ENCODE measurements at regions of chr17 and their contacts with region 1.

Region 1: DNA sequence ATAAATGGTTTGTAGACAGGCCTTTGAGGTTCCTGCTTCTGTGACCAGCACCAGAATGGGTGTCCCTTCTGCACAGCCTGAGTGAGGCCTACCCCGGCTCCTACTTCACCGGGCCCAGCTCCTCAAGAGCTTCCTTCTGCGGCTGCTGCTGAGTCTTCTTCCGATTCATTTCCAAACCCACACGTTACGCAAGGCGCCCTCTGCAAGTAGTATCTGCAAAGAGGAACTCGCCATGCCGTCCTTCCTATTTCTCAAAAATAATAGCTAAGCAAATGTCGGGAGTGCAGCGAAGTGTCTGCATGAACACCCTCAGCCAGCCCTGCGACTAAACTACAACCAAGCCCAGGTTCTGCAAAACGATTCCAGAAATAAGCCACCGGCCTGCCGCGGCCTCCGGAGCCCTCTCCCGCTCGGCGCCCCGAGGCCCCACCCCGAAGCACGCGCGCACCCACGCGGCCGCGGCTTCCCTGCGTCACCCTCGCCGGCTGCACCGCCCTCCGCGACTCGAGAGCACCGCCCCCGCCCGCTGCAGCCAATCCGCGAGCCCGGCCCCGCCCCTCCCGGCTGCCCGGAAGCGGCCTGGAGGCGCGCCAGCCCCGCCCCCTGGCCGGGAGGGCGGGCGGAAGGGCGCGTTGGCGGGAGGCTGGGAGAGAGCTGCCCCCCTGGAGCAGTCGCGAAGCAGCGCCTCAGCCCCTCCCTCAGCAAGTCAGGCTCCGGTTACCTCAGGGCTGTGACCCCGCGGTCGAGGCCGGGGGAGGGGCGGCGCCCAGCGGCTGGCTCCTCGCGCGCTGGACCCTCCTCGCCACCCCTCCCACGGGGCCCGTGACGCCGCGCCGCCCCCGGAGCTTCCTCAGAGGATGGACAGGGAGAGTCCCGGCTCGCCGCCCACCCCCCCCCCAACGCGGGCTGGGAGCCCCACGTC is 8.3 kb downstream of the MNT start:
- DNase-seq: peak; percentile 97
- H3K4me3 Mint-ChIP-seq: peak overlapping the region; percentile 88
- H3K27ac Mint-ChIP-seq: peak overlapping the region; percentile 91
- H3K4me1 Mint-ChIP-seq: peaks cover 57% of the 10 kb centered on the region
- H3K27me3 Mint-ChIP-seq: no peaks in the 10 kb centered on the region

Region 2: DNA sequence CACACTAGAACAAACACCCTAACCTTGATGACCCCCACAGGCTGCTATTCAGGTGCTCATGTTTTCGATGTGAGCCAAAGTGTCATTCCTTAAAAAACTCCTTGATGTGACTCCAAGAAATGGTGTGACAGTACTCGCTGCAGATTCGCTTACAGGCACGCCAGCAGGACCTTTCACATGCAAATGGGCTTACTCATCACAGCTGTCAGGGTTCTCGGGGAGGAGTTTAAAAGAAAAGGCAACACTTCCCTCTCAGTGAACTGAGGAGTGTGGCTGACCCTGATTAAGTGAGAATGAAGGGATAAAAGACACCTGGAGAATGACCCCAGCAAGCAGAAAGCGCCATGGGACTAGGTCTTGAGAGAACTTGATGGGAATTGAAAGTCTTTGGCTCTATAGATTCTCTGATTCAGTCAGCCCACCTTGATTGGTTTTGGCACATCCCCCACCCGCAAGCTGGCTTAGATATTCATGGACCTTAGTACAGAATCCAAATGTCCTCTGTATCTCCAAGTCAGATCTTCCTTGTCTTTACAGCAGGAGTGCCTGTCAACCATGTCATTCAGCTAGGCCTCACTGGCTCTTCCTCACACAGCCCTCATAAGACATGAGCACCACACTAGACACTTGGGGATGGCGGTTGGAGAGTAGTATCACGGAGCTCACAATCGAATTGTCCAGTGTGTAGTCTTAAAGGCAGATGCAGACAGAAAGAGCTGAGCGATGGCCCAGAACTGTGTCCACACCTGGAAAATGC is 255.0 kb before region 1 on chr17:
- CTCF ChIA-PET with region 1: no interaction called
- intact Hi-C with region 1: no loop called
- DNase-seq: no peak
- H3K4me3 Mint-ChIP-seq: no peak overlapping the region
- H3K27ac Mint-ChIP-seq: no peak overlapping the region
- H3K4me1 Mint-ChIP-seq: peaks cover 17% of the 10 kb centered on the region
- H3K27me3 Mint-ChIP-seq: no peaks in the 10 kb centered on the region

Region 3: GRCh38 chr17:2303204-2304188 is 89.0 kb before region 1 on chr17 and contains the starts of genes SMG6 and SRR:
- CTCF ChIA-PET with region 1: no interaction called
- intact Hi-C with region 1: loop called (anchors 2 kb)
- DNase-seq: peak; percentile 95
- H3K4me3 Mint-ChIP-seq: peak within 1 kb of the TSS; percentile 91
- H3K27ac Mint-ChIP-seq: peak within 1 kb of the TSS; percentile 70
- H3K4me1 Mint-ChIP-seq: peaks cover 45% of the 10 kb centered on the region
- H3K27me3 Mint-ChIP-seq: no peaks in the 10 kb centered on the region
- total RNA-seq, gene SMG6: 18.8 to 20.7 TPM
- total RNA-seq, gene SRR: 8.9 to 10.2 TPM

Region 4: GRCh38 chr17:2336215-2336851 is 56.2 kb before region 1 on chr17 and contains the start of gene TSR1:
- CTCF ChIA-PET with region 1: no interaction called
- intact Hi-C with region 1: loop called (anchors 1 kb)
- DNase-seq: peak; percentile 93
- H3K4me3 Mint-ChIP-seq: peak within 1 kb of the TSS; percentile 100
- H3K27ac Mint-ChIP-seq: peak within 1 kb of the TSS; percentile 96
- H3K4me1 Mint-ChIP-seq: peaks cover 15% of the 10 kb centered on the region
- H3K27me3 Mint-ChIP-seq: no peaks in the 10 kb centered on the region
- total RNA-seq, gene TSR1: 51.1 to 51.5 TPM

Region 5: DNA sequence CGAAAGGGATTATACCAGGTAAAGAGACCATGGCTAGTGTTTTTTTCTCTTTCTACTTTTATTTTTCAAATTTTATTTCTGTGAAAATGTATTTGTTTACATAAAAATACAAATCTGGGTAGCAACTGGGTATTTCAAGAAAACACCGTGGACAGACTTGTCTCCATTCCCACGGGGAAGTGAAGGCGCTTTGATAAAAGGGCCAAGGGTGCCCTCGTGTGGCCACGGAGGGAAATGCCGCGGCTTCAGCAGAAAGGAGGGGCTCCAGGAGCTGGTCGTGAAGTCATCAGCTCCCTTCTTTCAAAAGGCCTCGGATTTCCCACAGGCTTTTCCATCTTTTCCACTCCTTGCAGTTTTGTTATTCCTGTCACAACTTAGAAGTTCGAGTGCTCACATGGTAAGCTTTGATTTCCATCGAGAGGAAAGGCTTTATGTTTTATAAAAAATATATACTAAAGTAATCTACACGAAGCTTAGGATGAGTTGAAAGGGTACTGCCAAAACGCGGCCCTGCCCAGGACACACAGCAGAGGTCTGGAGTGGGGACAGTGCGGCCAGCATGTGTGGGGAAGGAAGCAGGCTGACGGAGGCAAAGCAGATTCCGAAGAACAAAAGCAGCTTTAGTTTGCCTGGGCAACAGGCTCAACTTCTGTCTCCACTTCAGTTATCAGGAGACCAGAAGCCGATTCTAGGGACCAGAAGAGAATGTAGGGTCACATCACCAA is 23.7 kb after region 1 on chr17:
- CTCF ChIA-PET with region 1: interaction called, 31 read pairs
- intact Hi-C with region 1: no loop called
- DNase-seq: peak; percentile 90
- H3K4me3 Mint-ChIP-seq: no peak overlapping the region
- H3K27ac Mint-ChIP-seq: peak overlapping the region; percentile 10
- H3K4me1 Mint-ChIP-seq: no peaks in the 10 kb centered on the region
- H3K27me3 Mint-ChIP-seq: no peaks in the 10 kb centered on the region

Region 6: DNA sequence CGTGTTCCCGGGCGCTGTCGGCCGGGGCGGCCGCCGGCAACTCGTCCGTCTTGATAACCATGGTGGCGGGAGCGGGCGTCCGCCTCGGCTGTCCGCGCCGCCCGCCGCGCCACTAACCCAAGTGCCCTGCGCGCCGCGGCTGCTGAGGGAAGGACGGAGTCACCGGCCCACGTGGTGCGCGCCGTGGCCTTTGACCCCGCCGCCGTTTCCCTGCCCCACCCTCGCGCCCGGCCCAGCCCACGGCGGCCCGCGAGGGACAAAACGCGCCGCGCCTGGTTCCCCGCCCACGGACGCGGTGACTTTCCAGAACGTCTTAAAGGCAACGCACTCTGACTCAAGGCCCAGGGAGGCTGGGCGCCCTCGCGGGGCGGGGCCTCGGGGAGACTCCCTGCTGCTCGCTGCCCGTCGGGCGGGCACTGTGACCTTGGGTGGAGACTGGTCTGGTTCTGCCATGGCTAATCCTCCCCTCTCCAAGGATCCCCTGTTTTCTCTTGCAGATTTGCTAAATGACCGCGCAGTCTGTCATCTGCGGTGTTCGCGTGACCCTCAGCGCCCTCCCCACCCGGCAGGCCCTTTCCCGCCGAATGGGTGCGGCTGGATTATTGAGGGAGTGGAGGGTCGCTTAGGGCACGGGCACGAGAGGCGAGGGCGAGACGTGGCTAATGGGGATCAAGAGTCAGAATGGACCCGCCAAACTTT is 319.2 kb after region 1 on chr17 and contains the start of gene CLUH:
- CTCF ChIA-PET with region 1: no interaction called
- intact Hi-C with region 1: loop called (anchors 2 kb)
- DNase-seq: peak; percentile 96
- H3K4me3 Mint-ChIP-seq: peak within 1 kb of the TSS; percentile 88
- H3K27ac Mint-ChIP-seq: peak within 1 kb of the TSS; percentile 82
- H3K4me1 Mint-ChIP-seq: peaks cover 32% of the 10 kb centered on the region
- H3K27me3 Mint-ChIP-seq: no peaks in the 10 kb centered on the region
- total RNA-seq, gene CLUH: 72.7 to 81.4 TPM

Region 7: GRCh38 chr17:3710951-3711383 is 1318.5 kb after region 1 on chr17:
- CTCF ChIA-PET with region 1: no interaction called
- intact Hi-C with region 1: loop called (anchors 2 kb)
- DNase-seq: peak; percentile 89
- H3K4me3 Mint-ChIP-seq: no peak overlapping the region
- H3K27ac Mint-ChIP-seq: peak overlapping the region; percentile 87
- H3K4me1 Mint-ChIP-seq: peaks cover 46% of the 10 kb centered on the region
- H3K27me3 Mint-ChIP-seq: no peaks in the 10 kb centered on the region

Measured in activated naive CD4-positive, alpha-beta T cell treated with anti-CD3 and anti-CD28 coated beads for 36 hours (primary cell).